ENCODE measurements at regions of chr12 and their contacts with region 1.

Region 1: GRCh38 chr12:111942557-111942956 is 70.4 kb downstream of the TMEM116 start:
- DNase-seq: no peak
- H3K4me3 ChIP-seq: no peak overlapping the region
- H3K27ac ChIP-seq: no peak overlapping the region
- H3K4me1 ChIP-seq: no peaks in the 10 kb centered on the region
- H3K27me3 ChIP-seq: no peaks in the 10 kb centered on the region
- CTCF ChIP-seq: no peak
- EP300 ChIP-seq: no peak
- POLR2A ChIP-seq: no peak

Region 2: GRCh38 chr12:111741235-111741812 is 201.2 kb before region 1 on chr12:
- intact Hi-C with region 1: no loop called
- DNase-seq: peak in 2 of 5 donors; percentile 26 to 43
- H3K4me3 ChIP-seq: no peak overlapping the region
- H3K27ac ChIP-seq: peak overlapping the region in 1 of 2 donors; percentile 38
- H3K4me1 ChIP-seq: peaks cover 2% of the 10 kb centered on the region
- H3K27me3 ChIP-seq: no peaks in the 10 kb centered on the region
- CTCF ChIP-seq: no peak
- EP300 ChIP-seq: no peak
- POLR2A ChIP-seq: no peak

Region 3: GRCh38 chr12:112012775-112013600 is 70.4 kb after region 1 on chr12 and contains the starts of genes ERP29 and TMEM116:
- intact Hi-C with region 1: loop called in 1 of 4 experiments (anchors 5 kb)
- DNase-seq: peak; percentile 100
- H3K4me3 ChIP-seq: peak within 1 kb of the TSS; percentile 91
- H3K27ac ChIP-seq: peak within 1 kb of the TSS; percentile 83 to 87
- H3K4me1 ChIP-seq: peaks cover 14% of the 10 kb centered on the region
- H3K27me3 ChIP-seq: no peaks in the 10 kb centered on the region
- CTCF ChIP-seq: peak; percentile 50 to 86 (median 73)
- EP300 ChIP-seq: no peak
- POLR2A ChIP-seq: peak; percentile 98
- total RNA-seq, gene ERP29: 28.1 to 76.7 (median 68.3) TPM
- total RNA-seq, gene TMEM116: 10.6 to 16.7 (median 11.3) TPM

Region 4: GRCh38 chr12:112125250-112125999 is 182.9 kb after region 1 on chr12 and contains the start of gene TRAFD1:
- intact Hi-C with region 1: no loop called
- DNase-seq: peak; percentile 98 to 99 (median 98)
- H3K4me3 ChIP-seq: peak within 1 kb of the TSS; percentile 79
- H3K27ac ChIP-seq: peak within 1 kb of the TSS; percentile 74 to 82
- H3K4me1 ChIP-seq: peaks cover 16% of the 10 kb centered on the region
- H3K27me3 ChIP-seq: no peaks in the 10 kb centered on the region
- CTCF ChIP-seq: no peak
- EP300 ChIP-seq: no peak
- POLR2A ChIP-seq: peak; percentile 94
- total RNA-seq, gene TRAFD1: 13.9 to 27.4 (median 25.5) TPM

Region 5: DNA sequence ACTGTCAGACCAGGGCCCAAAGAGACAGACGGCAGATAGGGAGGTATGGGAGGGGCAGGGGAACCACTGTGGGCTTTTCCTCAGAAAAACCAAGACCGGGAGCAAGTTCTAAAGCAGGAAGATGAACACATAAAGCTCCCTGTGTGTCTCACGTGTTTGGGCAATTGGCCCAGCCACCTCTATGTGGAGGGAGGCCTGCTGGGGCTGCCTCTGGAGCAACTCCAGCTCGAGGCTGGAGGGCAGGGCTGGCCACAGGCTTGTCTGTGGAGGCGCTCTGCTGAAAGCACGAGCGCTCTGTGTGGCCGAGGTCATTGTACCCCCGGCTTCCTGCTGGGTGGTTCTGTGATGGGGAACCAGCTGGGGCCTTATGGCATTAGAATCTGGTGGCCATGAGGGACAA is 219.2 kb after region 1 on chr12:
- intact Hi-C with region 1: loop called in 1 of 4 experiments (anchors 10 kb)
- DNase-seq: peak in 1 of 5 donors; percentile 21
- H3K4me3 ChIP-seq: no peak overlapping the region
- H3K27ac ChIP-seq: no peak overlapping the region
- H3K4me1 ChIP-seq: no peaks in the 10 kb centered on the region
- H3K27me3 ChIP-seq: no peaks in the 10 kb centered on the region
- CTCF ChIP-seq: no peak
- EP300 ChIP-seq: no peak
- POLR2A ChIP-seq: no peak

Measured in ovary (tissue), 10 donors.